ENCODE measurements at regions of chr17 and their contacts with region 1.

Region 1: DNA sequence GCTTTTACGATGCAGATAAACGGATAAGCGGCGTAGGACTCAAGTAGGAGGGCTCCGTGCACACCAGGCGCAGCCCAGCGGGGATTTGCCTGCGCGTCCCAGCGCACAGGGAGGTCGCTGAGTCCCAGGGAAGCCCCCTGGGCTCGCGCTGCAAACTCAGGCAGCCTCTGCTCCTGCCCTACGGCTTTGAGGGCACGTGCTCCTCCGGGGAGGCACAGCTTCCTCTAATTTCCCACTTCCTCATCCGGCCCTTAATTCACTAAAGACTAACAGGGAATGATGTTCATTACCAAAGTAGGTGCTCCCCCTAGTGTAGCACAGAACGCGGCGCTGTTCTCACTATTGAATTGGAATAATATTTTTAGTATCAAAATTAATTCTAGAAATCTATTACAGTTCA is 825.4 kb downstream of the KCNJ18 start:
- DNase-seq: no peak
- ATAC-seq: no peak
- H3K4me3 Mint-ChIP-seq: no peak overlapping the region
- H3K27ac Mint-ChIP-seq: no peak overlapping the region
- H3K4me1 Mint-ChIP-seq: no peaks in the 10 kb centered on the region
- H3K27me3 Mint-ChIP-seq: no peaks in the 10 kb centered on the region

Region 2: DNA sequence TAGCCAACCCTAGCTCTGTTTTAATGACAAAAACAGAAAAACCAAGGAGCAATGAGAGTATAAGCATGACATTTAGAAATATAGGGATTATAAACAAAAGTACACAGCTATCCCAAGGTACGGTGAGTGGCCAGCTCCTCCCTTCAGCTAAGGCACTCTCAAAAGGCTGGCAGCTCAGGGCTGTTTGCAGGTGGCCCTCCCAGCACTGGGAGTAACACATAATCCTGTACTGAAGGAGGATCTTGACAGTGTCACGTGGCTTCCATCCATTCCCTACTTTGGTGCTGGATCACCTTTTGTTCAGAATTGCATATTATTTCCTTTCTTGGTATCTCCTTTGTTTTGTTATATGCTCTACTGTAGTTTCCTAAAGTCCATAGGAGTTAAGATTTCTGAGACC is 324.6 kb before region 1 on chr17:
- CTCF ChIA-PET with region 1: no interaction called
- POLR2A ChIA-PET with region 1: no interaction called
- intact Hi-C with region 1: loop called in 1 of 2 experiments (anchors 10 kb)
- DNase-seq: no peak
- ATAC-seq: no peak
- H3K4me3 Mint-ChIP-seq: no peak overlapping the region
- H3K27ac Mint-ChIP-seq: no peak overlapping the region
- H3K4me1 Mint-ChIP-seq: no peaks in the 10 kb centered on the region
- H3K27me3 Mint-ChIP-seq: no peaks in the 10 kb centered on the region

Region 3: DNA sequence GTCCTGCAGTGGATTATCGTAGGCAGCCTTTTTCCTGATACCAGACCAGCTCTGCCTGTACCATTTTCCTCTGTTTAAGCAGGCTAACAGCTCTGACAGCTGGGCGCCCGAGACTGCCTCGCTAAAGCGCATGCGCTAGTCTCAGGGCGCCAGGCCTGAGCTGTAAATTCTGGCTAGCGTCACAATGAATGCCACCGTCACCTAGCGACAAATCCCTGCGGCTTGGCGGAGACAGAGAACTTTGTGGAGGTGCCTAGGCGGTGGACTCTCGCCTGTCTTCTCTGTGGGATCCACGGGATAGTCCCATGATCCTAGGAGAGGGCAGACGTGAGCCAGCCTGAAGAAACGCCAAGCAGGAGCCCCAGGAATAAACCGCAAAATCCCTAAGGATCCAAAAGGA is 251.5 kb before region 1 on chr17:
- CTCF ChIA-PET with region 1: no interaction called
- POLR2A ChIA-PET with region 1: no interaction called
- intact Hi-C with region 1: loop called in 1 of 2 experiments (anchors 10 kb)
- DNase-seq: no peak
- ATAC-seq: no peak
- H3K4me3 Mint-ChIP-seq: no peak overlapping the region
- H3K27ac Mint-ChIP-seq: no peak overlapping the region
- H3K4me1 Mint-ChIP-seq: no peaks in the 10 kb centered on the region
- H3K27me3 Mint-ChIP-seq: no peaks in the 10 kb centered on the region

Region 4: GRCh38 chr17:22310717-22311686 is 206.7 kb before region 1 on chr17:
- CTCF ChIA-PET with region 1: no interaction called
- POLR2A ChIA-PET with region 1: no interaction called
- intact Hi-C with region 1: no loop called
- DNase-seq: no peak
- ATAC-seq: no peak
- H3K4me3 Mint-ChIP-seq: no peak overlapping the region
- H3K27ac Mint-ChIP-seq: no peak overlapping the region
- H3K4me1 Mint-ChIP-seq: no peaks in the 10 kb centered on the region
- H3K27me3 Mint-ChIP-seq: no peaks in the 10 kb centered on the region

Region 5: GRCh38 chr17:22463110-22463850 is 54.4 kb before region 1 on chr17:
- CTCF ChIA-PET with region 1: no interaction called
- POLR2A ChIA-PET with region 1: no interaction called
- intact Hi-C with region 1: loop called in 1 of 2 experiments (anchors 10 kb)
- DNase-seq: no peak
- ATAC-seq: no peak
- H3K4me3 Mint-ChIP-seq: no peak overlapping the region
- H3K27ac Mint-ChIP-seq: no peak overlapping the region
- H3K4me1 Mint-ChIP-seq: no peaks in the 10 kb centered on the region
- H3K27me3 Mint-ChIP-seq: no peaks in the 10 kb centered on the region

Region 6: GRCh38 chr17:22692066-22692805 is 174.5 kb after region 1 on chr17:
- CTCF ChIA-PET with region 1: no interaction called
- POLR2A ChIA-PET with region 1: no interaction called
- intact Hi-C with region 1: no loop called
- DNase-seq: no peak
- ATAC-seq: no peak
- H3K4me3 Mint-ChIP-seq: no peak overlapping the region
- H3K27ac Mint-ChIP-seq: no peak overlapping the region
- H3K4me1 Mint-ChIP-seq: no peaks in the 10 kb centered on the region
- H3K27me3 Mint-ChIP-seq: no peaks in the 10 kb centered on the region

Measured in activated CD4-positive, alpha-beta T cell treated with anti-CD3 and anti-CD28 coated beads for 36 hours (primary cell).